Common myeloid progenitor, CD34-positive (primary cell): ENCODE measurements at regions of chr5 and their contacts with region 1.

Region 1: GRCh38 chr5:132272311-132273210 is 15.1 kb downstream of the PDLIM4 start:
- DNase-seq: peak; percentile 68 to 80 (median 74)
- H3K4me3 ChIP-seq: peak overlapping the region in 1 of 7 experiments; percentile 47
- H3K27ac ChIP-seq: no peak overlapping the region
- H3K4me1 ChIP-seq: peaks cover 0 to 6% (median 4%) of the 10 kb centered on the region in 4 experiments
- H3K27me3 ChIP-seq: peaks cover 0 to 4% (median 0%) of the 10 kb centered on the region in 5 experiments

Region 2: GRCh38 chr5:132251220-132251725 is 21.3 kb before region 1 on chr5:
- CTCF ChIA-PET with region 1: interaction called, 10 read pairs
- POLR2A ChIA-PET with region 1: no interaction called
- DNase-seq: no peak
- H3K4me3 ChIP-seq: no peak overlapping the region
- H3K27ac ChIP-seq: no peak overlapping the region
- H3K4me1 ChIP-seq: peaks cover 0 to 3% (median 0%) of the 10 kb centered on the region in 4 experiments
- H3K27me3 ChIP-seq: peaks cover 0 to 7% (median 0%) of the 10 kb centered on the region in 5 experiments

Region 3: GRCh38 chr5:132260714-132261551 is 11.6 kb before region 1 on chr5:
- CTCF ChIA-PET with region 1: interaction called, 35 read pairs
- POLR2A ChIA-PET with region 1: no interaction called
- DNase-seq: peak; percentile 72 to 91 (median 89)
- H3K4me3 ChIP-seq: peak overlapping the region in 1 of 7 experiments; percentile 1
- H3K27ac ChIP-seq: no peak overlapping the region
- H3K4me1 ChIP-seq: peaks cover 2 to 54% (median 40%) of the 10 kb centered on the region in 4 experiments
- H3K27me3 ChIP-seq: peaks cover 0 to 20% (median 12%) of the 10 kb centered on the region in 5 experiments

Region 4: GRCh38 chr5:132283423-132284043 is 11.0 kb after region 1 on chr5:
- CTCF ChIA-PET with region 1: interaction called, 14 read pairs
- POLR2A ChIA-PET with region 1: no interaction called
- DNase-seq: peak in 2 of 3 donors; percentile 55 to 57
- H3K4me3 ChIP-seq: no peak overlapping the region
- H3K27ac ChIP-seq: no peak overlapping the region
- H3K4me1 ChIP-seq: no peaks in the 10 kb centered on the region
- H3K27me3 ChIP-seq: no peaks in the 10 kb centered on the region

Region 5: GRCh38 chr5:132293066-132293991 is 20.8 kb after region 1 on chr5:
- CTCF ChIA-PET with region 1: interaction called, 41 read pairs
- POLR2A ChIA-PET with region 1: no interaction called
- DNase-seq: peak; percentile 84 to 93 (median 93)
- H3K4me3 ChIP-seq: peak overlapping the region; percentile 24 to 88 (median 68)
- H3K27ac ChIP-seq: peak overlapping the region; percentile 53 to 78
- H3K4me1 ChIP-seq: peaks cover 14 to 43% (median 36%) of the 10 kb centered on the region in 4 experiments
- H3K27me3 ChIP-seq: peaks cover 0 to 2% (median 0%) of the 10 kb centered on the region in 5 experiments

Region 6: DNA sequence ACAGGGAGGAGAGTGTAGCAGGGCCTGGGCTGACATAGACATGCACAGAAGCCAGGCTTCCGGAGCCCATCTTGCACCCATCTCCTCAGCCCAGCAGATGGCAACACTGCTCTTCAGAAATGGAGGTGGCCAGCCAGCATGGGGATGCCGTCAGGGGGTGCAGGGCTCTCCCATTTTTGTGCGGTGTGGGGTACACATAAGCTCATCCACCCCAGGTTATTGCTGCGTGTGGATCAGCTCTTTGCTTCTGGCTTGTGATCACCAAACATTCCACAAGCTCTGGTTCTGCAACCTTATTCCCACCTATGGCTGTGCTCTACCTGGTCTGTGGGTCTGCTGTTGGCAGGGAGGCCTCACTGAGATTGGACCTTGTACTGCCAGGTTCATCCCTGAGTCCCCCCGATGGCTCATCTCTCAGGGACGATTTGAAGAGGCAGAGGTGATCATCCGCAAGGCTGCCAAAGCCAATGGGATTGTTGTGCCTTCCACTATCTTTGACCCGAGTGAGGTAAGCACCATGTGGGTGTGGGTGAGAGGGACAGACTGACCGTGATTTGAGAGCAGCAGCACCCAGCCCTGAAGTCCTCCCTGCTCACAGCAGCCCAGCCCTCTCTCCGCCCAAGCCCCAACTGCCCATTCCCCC is 114.2 kb after region 1 on chr5:
- CTCF ChIA-PET with region 1: interaction called, 15 read pairs
- POLR2A ChIA-PET with region 1: no interaction called
- DNase-seq: peak; percentile 74 to 89 (median 87)
- H3K4me3 ChIP-seq: no peak overlapping the region
- H3K27ac ChIP-seq: no peak overlapping the region
- H3K4me1 ChIP-seq: peaks cover 0 to 50% (median 31%) of the 10 kb centered on the region in 4 experiments
- H3K27me3 ChIP-seq: no peaks in the 10 kb centered on the region

Region 7: GRCh38 chr5:132641841-132642240 is 369.3 kb after region 1 on chr5:
- CTCF ChIA-PET with region 1: no interaction called
- POLR2A ChIA-PET with region 1: no interaction called
- DNase-seq: no peak
- H3K4me3 ChIP-seq: no peak overlapping the region
- H3K27ac ChIP-seq: no peak overlapping the region
- H3K4me1 ChIP-seq: peaks cover 0 to 21% (median 6%) of the 10 kb centered on the region in 4 experiments
- H3K27me3 ChIP-seq: no peaks in the 10 kb centered on the region